IMR-90 (cell line): ENCODE measurements at regions of chr6 and their contacts with region 1.

Region 1: DNA sequence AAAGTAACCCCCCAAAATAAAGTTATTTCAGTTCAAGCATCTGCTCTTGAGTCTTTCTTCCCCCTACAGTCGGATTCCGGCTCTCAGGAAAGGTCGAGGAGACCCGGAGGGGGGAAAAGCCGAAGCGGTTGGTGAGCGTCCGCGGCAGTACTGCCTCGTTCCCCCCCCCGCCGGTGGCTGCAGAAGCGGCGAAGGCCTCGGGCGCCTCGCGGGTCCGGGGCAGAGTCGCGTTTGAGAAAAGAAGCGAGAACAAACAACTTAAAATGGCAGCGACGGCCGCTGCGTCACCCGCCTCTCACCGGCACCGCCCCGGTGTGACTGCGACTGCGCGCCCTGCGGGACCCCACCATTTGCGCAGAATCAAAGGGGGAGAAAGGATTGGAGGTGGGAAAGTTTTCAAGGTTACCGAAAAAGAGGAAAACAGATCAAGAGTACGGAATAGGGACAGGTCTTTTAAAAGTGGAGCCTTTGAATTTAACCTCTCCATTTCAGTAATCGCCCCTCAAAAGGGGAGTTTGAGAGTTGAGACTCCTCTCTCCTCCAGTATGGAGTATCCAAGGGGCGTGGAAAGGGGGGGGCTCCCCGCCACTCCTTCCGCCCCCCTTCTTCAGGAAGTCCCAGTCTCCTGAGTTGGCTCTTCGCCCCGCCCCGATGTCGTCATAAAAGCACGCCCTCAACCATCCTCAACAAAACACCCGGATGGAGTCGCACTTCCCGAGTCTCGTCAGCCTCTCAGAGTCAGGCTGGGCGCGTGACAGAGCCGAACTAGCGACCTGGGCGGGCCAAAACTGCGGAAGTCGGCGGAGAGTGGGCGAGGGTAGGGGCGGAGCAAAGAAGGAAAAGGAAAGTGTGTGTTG is 1.9 kb upstream of the C6orf62 start:
- DNase-seq: peak; percentile 100
- ATAC-seq: peak; percentile 92
- H3K4me3 ChIP-seq: peak overlapping the region; percentile 98
- H3K27ac ChIP-seq: peak overlapping the region; percentile 98
- H3K4me1 ChIP-seq: no peaks in the 10 kb centered on the region
- H3K27me3 ChIP-seq: no peaks in the 10 kb centered on the region
- CTCF ChIP-seq: no peak
- POLR2A ChIP-seq: peak; percentile 99
- RAD21 ChIP-seq: no peak

Region 2: DNA sequence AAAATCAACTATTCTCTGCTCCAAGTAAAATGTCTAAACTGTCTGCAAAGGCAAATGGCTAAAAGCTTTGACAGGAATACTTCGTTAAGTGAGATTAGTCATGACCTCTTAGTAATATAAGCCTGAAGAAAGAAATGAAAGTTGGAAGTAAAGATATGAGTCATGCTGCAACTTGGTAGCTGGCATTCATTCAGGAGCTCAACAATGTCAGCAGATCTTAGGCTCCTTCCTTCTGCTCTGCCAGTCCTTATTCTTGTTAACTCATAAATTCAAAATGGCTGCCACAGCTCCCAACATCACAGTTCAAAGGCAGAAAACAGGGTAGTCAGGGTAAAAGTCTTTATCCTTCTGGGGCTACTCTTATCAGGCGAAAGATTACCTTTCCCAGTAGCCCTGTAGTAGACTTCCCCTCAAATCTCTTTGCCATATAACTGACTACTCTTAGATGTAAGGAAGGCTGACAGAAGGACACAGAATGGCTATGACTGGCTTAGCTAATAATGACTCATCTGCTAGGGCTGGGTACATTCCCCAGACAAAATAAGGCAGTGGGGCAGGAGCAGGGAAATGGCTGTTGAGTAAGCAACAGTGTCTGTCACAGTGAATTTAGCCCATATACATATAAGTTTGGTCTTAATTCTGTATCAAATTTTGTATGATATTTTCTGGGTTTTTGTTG is 22.6 kb after region 1 on chr6:
- CTCF ChIA-PET with region 1: interaction called, 4 read pairs
- POLR2A ChIA-PET with region 1: interaction called, 18 read pairs
- dilution Hi-C with region 1: no loop called
- in situ Hi-C with region 1: no loop called
- intact Hi-C with region 1: loop called (anchors 1 kb)
- DNase-seq: peak; percentile 98
- ATAC-seq: peak; percentile 93
- H3K4me3 ChIP-seq: peak overlapping the region; percentile 19; the same call in 1 of the 2 replicates
- H3K27ac ChIP-seq: peak overlapping the region; percentile 67
- H3K4me1 ChIP-seq: peaks cover 3% of the 10 kb centered on the region
- H3K27me3 ChIP-seq: no peaks in the 10 kb centered on the region
- CTCF ChIP-seq: no peak
- POLR2A ChIP-seq: no peak; the same call in 1 of the 2 replicates
- RAD21 ChIP-seq: no peak; the same call in 1 of the 2 replicates

Region 3: DNA sequence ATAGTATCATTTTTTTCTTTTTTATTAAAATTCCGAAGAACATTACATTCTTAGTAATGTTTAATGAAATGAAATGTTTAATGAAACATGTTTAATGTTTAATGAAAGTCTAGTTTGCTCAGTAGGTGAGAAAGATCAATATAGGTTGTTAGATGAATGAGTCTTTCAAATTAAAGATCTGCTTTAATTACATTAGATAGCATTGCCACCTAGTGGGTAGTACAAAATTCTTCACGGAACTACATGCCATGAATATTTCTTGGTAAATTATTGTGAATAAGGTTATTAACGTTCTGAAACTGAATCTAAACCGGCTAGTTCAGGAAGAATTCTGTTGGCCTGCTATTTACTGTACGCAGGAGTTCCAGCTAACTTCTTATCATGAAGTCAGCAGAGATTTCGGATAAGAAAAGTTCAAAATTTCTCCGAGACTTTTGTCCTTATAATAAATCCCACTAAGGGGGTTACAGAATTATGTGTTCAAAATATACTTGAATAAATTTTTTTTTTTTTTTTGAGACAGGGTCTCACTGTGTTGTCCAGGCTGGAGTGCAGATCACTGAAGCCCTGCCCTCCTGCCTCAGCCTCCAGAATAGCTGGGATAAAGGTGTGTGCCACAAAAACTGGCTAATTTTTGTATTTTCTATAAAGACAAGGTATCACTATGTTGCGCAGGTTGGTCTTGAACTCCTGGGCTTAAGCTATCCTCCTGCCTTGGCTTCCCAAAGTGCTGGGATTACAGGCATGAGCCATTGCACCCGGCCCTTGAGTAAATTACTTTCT is 46.0 kb after region 1 on chr6:
- CTCF ChIA-PET with region 1: no interaction called
- POLR2A ChIA-PET with region 1: no interaction called
- dilution Hi-C with region 1: no loop called
- in situ Hi-C with region 1: no loop called
- intact Hi-C with region 1: loop called (anchors 2 kb)
- DNase-seq: peak; percentile 49
- ATAC-seq: peak; percentile 75
- H3K4me3 ChIP-seq: no peak overlapping the region
- H3K27ac ChIP-seq: no peak overlapping the region
- H3K4me1 ChIP-seq: peaks cover 2% of the 10 kb centered on the region; the same call in 1 of the 2 replicates
- H3K27me3 ChIP-seq: no peaks in the 10 kb centered on the region
- CTCF ChIP-seq: peak; percentile 68
- POLR2A ChIP-seq: no peak
- RAD21 ChIP-seq: peak; percentile 73

Region 4: GRCh38 chr6:24774696-24775519 is 54.1 kb after region 1 on chr6 and contains the start of gene GMNN:
- CTCF ChIA-PET with region 1: no interaction called
- POLR2A ChIA-PET with region 1: no interaction called
- dilution Hi-C with region 1: no loop called
- in situ Hi-C with region 1: no loop called
- intact Hi-C with region 1: loop called (anchors 2 kb)
- DNase-seq: peak; percentile 89
- ATAC-seq: peak; percentile 93
- H3K4me3 ChIP-seq: peak within 1 kb of the TSS; percentile 87
- H3K27ac ChIP-seq: peak within 1 kb of the TSS; percentile 83
- H3K4me1 ChIP-seq: peaks cover 8% of the 10 kb centered on the region
- H3K27me3 ChIP-seq: no peaks in the 10 kb centered on the region
- CTCF ChIP-seq: no peak
- POLR2A ChIP-seq: peak; percentile 73; the same call in 1 of the 2 replicates
- RAD21 ChIP-seq: no peak
- total RNA-seq, gene GMNN: 19.7 and 33.1 TPM in 2 replicates

Region 5: DNA sequence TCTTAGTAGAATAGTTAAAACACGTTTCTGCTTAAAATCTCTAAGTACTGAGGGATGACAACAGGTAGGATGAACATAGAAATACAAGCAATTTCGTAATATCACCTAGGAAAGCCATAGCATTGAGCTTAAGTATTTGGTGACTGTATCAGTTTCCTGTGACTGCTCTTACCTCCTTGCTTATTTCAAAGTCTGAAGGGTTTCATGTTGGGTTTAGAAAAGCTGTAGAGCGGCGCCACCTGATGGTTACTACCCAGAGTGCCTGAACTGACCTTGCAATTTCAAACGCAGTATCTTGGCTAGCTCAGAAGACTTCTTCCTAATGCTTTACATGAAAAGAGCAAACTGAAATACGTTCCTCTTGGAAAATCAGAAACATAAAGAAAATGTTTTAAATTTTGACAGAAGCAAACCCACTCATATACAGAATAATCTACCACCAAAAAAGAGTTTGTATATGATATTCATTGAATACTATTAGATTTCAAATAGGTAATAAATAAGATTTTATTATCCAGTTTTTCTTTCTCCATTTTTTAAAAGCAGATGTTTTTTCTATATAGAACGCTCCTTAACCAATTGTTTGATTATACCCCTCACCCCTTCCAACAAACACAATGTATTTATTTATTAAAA is 297.2 kb after region 1 on chr6:
- CTCF ChIA-PET with region 1: no interaction called
- POLR2A ChIA-PET with region 1: no interaction called
- dilution Hi-C with region 1: no loop called
- in situ Hi-C with region 1: no loop called
- intact Hi-C with region 1: loop called (anchors 5 kb)
- DNase-seq: peak; percentile 65
- ATAC-seq: 0 out of 2 replicates have a peak, but pooled peaks have one; percentile 22
- H3K4me3 ChIP-seq: no peak overlapping the region
- H3K27ac ChIP-seq: no peak overlapping the region
- H3K4me1 ChIP-seq: peaks cover 12% of the 10 kb centered on the region
- H3K27me3 ChIP-seq: no peaks in the 10 kb centered on the region
- CTCF ChIP-seq: peak; percentile 67
- POLR2A ChIP-seq: no peak
- RAD21 ChIP-seq: peak; percentile 82